A549 (cell line): ENCODE measurements at regions of chr17 and their contacts with region 1.

Region 1: DNA sequence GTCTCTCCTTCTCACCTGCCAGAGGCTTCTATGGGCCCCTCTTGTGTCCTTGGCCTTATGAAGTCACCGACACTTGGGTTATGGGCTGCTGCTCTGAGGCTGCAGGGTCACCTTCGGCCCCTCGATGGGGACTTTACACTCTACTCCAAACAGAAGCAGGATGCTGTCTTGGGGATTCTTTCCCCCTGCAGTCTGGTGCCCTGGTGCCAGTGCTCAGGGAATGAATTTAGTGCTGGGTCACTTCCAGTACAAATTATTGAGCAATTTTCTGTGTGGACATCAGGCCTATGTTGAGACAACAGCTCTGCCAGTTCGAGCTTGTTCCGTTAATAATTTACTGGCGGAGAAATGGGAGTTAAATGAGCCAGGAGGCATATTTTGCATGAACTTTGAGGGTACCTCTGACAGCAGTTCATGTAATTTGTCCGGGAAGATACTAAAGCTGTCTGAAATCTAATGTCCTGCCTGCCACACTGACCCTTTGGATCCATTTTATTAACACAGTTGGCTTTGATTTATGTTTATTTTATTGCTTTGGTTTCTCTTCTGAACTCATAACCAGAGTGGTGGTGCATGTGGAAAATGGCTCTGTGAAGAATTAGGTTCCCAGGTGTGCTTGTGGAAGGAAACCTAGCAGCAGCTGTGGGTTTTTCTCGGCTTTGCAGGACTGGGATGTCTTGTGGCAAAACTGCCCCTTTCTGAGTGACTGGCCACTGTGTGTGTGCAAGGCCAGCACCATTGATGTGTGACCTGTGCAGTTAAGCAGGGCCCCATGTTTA is 34.1 kb upstream of the DHX8 start:
- DNase-seq: peak; percentile 67 to 80
- ATAC-seq: peak; percentile 88 to 91
- H3K4me3 ChIP-seq: no peak overlapping the region
- H3K27ac ChIP-seq: peak overlapping the region; percentile 70 to 87
- H3K4me1 ChIP-seq: peaks cover 26% of the 10 kb centered on the region
- CTCF ChIP-seq: no peak
- EP300 ChIP-seq: no peak; a peak in 1 of 5 replicates
- POLR2A ChIP-seq: no peak
- RAD21 ChIP-seq: peak in 1 of 2 experiments; percentile 26; a peak in 2 of 5 replicates

Region 2: DNA sequence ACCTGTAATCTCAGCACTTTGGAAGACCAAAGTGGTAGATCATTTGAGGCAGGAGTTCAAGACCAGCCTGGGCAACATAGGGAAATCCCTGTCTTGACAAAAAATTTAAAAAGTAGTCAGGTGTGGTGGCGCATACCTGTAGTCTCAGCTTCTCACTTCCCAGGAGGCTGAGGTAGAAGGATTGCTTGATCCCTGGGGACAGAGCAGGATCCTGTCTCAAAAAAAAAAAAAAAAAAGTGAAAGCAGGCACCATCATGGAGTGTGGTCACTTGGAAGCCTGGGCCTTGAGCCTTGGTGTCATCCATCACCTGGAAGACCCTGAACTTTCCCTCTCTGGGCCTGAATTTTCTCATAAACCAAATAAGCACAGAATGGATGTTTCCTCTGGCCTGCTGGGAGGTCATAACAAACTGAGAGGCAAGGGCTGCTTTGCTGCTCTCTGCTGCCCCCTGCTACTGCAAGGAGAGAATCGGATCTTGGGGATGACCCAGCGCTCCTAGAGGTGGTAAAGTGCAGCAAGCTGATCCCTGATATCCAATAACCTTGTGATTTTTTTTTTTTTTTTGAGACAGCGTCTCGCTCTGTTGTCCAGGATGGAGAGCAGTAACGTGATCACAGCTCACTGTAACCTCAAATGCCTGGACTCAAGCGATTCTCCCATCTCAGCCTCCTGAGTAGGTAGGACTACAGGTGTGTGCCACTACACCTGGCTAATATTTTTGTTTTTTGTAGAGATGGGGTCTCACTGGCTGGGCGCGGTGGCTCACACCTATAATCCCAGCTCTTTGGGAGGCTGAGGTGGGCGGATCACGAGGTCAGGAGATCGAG is 139.9 kb before region 1 on chr17:
- CTCF ChIA-PET with region 1: no interaction called
- POLR2A ChIA-PET with region 1: no interaction called
- DNase-seq: peak in 1 of 2 experiments; percentile 58
- ATAC-seq: no peak
- H3K4me3 ChIP-seq: no peak overlapping the region
- H3K27ac ChIP-seq: no peak overlapping the region; a peak in 1 of 6 replicates
- H3K4me1 ChIP-seq: no peaks in the 10 kb centered on the region; the same call in 1 of the 3 replicates
- CTCF ChIP-seq: no peak
- EP300 ChIP-seq: no peak
- POLR2A ChIP-seq: no peak
- RAD21 ChIP-seq: no peak

Region 3: DNA sequence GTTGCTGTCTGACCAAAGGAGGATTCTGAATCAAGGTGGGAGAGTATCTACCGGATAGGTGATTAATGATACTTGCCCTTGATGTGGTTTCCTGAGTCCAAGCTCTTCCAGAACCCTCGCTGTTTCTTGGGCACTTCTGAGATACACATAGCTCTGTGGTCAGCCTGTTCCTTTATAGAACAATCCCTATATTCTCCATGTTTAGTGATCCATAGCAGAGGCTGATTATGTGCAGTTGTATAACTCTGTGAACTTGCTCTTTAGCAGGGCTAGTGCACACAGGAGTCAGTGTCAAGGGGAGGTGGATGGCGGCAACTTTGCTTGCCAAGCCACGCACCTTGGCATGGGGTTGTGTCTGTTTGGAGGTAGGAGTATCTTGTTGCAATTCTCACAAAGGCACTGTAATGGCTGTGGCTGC is 14.7 kb before region 1 on chr17:
- CTCF ChIA-PET with region 1: interaction called, 2,036 read pairs
- POLR2A ChIA-PET with region 1: no interaction called
- DNase-seq: no peak
- ATAC-seq: no peak
- H3K4me3 ChIP-seq: no peak overlapping the region
- H3K27ac ChIP-seq: peak overlapping the region in 1 of 2 experiments; percentile 6; a peak in 2 of 6 replicates
- H3K4me1 ChIP-seq: peaks cover 52% of the 10 kb centered on the region
- CTCF ChIP-seq: no peak
- EP300 ChIP-seq: no peak
- POLR2A ChIP-seq: no peak
- RAD21 ChIP-seq: no peak